Stomach (tissue), 19 donors: ENCODE measurements at regions of chr16 and their contacts with region 1.

Region 1: DNA sequence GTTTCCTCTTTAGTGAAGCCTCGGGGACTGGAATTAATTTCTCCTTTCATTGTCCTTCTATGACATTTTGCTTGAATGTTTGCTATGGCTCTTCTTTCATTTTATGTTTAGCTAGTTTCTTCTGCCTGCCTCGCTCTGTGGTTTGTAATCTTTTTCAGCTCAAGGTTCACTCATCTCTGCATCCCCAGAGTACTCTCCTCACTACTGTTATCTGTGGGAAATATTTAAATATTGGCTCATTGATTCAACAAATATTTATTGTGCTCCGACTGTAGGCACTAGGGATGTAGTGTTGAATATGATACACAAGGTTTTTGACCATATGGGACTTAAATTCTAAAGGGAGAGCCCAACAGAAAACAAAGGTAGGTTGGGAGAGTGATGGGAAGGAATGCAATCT is 195.9 kb downstream of the PHKB start:
- DNase-seq: no peak
- H3K4me3 ChIP-seq: no peak overlapping the region
- H3K27ac ChIP-seq: no peak overlapping the region
- H3K4me1 ChIP-seq: no peaks in the 10 kb centered on the region
- H3K27me3 ChIP-seq: no peaks in the 10 kb centered on the region
- CTCF ChIP-seq: no peak
- EP300 ChIP-seq: no peak
- POLR2A ChIP-seq: no peak

Region 2: DNA sequence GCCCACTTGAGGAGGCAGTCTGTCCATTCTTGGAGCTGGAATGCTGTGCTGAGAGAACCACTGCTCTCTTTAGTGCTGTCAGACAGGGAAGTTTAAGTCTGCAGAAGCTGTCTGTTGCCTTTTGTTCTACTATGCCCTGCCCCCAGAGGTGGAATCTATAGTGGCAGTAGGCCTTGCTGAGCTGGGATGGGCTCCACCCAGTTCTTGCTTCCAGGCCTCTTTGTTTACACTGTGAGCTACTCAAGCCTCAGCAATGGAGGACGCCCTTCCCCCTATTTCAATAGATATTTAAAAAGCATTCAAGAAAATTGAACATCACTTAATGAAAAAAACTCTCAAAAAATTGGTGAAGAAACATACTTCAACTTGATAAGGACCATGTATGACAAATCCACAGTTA is 117.6 kb after region 1 on chr16:
- intact Hi-C with region 1: loop called (anchors 5 kb)
- DNase-seq: peak; percentile 58 to 67
- H3K4me3 ChIP-seq: no peak overlapping the region
- H3K27ac ChIP-seq: no peak overlapping the region
- H3K4me1 ChIP-seq: no peaks in the 10 kb centered on the region
- H3K27me3 ChIP-seq: no peaks in the 10 kb centered on the region
- CTCF ChIP-seq: no peak
- EP300 ChIP-seq: no peak
- POLR2A ChIP-seq: no peak

Region 3: GRCh38 chr16:48100696-48101674 is 444.0 kb after region 1 on chr16:
- intact Hi-C with region 1: no loop called
- DNase-seq: no peak
- H3K4me3 ChIP-seq: no peak overlapping the region
- H3K27ac ChIP-seq: no peak overlapping the region
- H3K4me1 ChIP-seq: no peaks in the 10 kb centered on the region
- H3K27me3 ChIP-seq: no peaks in the 10 kb centered on the region
- CTCF ChIP-seq: no peak
- EP300 ChIP-seq: no peak
- POLR2A ChIP-seq: no peak